ENCODE measurements at regions of chr20 and their contacts with region 1.

Region 1: GRCh38 chr20:45695496-45695895 is 6.3 kb upstream of the WFDC13 start:
- DNase-seq: no peak
- ATAC-seq: no peak
- H3K4me3 ChIP-seq: no peak overlapping the region
- H3K27ac ChIP-seq: no peak overlapping the region
- H3K4me1 ChIP-seq: no peaks in the 10 kb centered on the region
- H3K27me3 ChIP-seq: peaks cover 0 to 5% (median 0%) of the 10 kb centered on the region in 7 donors
- CTCF ChIP-seq: no peak

Region 2: GRCh38 chr20:45611054-45611453 is 84.4 kb before region 1 on chr20:
- intact Hi-C with region 1: loop called in 1 of 10 experiments (anchors 1 kb)
- DNase-seq: no peak
- ATAC-seq: no peak
- H3K4me3 ChIP-seq: no peak overlapping the region
- H3K27ac ChIP-seq: no peak overlapping the region
- H3K4me1 ChIP-seq: no peaks in the 10 kb centered on the region
- H3K27me3 ChIP-seq: peaks cover 0 to 7% (median 0%) of the 10 kb centered on the region in 7 donors
- CTCF ChIP-seq: no peak

Measured in heart right ventricle (tissue), 16 donors.